Heart left ventricle (tissue), 16 donors: ENCODE measurements at regions of chr15 and their contacts with region 1.

Region 1: DNA sequence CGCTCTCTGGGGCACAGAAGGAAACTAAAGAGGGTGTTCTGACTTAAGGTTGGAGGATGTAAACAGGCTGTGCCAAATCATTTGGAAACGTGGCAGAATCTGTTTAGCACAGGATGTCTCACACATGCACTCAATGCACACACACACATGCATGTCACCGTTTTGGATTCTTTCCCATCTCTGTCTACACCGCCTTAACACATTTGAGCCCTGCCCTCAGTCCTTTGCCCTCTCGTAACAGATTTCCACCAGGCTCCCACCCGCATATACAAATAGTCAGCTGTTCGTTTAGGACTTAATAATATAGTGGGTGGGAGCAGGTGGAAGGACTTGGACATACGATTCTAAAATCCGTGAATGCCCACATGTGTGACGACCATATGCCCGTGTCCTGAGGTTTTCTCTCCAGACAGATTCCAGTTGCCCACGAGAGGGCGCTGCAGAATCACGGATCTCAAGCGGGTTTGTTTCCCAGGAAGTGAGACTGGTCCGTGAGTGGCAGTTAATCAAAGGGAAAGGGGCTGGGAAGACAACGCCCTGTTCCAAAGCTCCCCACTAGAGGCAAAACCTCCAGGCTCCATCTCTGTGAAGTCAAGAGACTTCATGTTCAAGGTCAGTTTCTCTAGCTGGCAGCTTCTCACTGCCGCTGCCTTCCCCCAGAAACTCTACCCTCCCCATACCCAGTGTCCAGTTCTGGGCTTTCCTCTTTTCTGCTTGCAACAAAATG is 44.5 kb downstream of the NOX5 start:
- DNase-seq: peak; percentile 84 to 93 (median 87)
- ATAC-seq: peak; percentile 78 to 85 (median 81)
- H3K4me3 ChIP-seq: peak overlapping the region in 6 of 12 donors; percentile 0 to 29 (median 22)
- H3K27ac ChIP-seq: peak overlapping the region in 8 of 12 donors; percentile 37 to 72 (median 58)
- H3K4me1 ChIP-seq: peaks cover 0 to 23% (median 16%) of the 10 kb centered on the region in 12 donors
- H3K27me3 ChIP-seq: peaks cover 0 to 8% (median 0%) of the 10 kb centered on the region in 9 donors
- CTCF ChIP-seq: peak; percentile 80 to 93 (median 88)
- POLR2A ChIP-seq: no peak

Region 2: DNA sequence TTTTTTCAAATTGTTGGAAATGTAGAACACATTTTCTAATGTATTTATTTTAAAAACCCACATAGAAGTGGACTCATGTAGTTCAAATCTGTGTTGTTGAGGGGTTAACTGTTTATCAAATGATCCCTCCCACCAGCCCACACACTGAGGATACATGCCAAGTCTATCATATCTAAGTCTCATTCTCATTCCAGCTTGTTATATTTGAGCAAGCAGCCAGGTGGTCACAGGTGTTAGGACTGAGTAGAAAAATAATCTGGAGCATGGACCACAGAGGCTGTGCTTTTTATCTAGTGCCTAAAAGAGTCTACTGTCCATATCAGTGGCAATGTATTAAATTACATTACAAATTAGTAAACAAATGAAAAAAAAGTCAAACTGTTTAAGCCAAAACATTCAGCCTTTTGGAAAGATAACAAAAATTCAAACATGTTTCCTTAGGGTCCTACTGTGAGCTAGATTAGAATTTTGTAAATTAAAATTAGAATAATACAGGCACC is 149.3 kb before region 1 on chr15:
- intact Hi-C with region 1: no loop called
- DNase-seq: no peak
- ATAC-seq: no peak
- H3K4me3 ChIP-seq: no peak overlapping the region
- H3K27ac ChIP-seq: no peak overlapping the region
- H3K4me1 ChIP-seq: no peaks in the 10 kb centered on the region
- H3K27me3 ChIP-seq: peaks cover 0 to 4% (median 0%) of the 10 kb centered on the region in 9 donors
- CTCF ChIP-seq: no peak
- POLR2A ChIP-seq: no peak

Region 3: DNA sequence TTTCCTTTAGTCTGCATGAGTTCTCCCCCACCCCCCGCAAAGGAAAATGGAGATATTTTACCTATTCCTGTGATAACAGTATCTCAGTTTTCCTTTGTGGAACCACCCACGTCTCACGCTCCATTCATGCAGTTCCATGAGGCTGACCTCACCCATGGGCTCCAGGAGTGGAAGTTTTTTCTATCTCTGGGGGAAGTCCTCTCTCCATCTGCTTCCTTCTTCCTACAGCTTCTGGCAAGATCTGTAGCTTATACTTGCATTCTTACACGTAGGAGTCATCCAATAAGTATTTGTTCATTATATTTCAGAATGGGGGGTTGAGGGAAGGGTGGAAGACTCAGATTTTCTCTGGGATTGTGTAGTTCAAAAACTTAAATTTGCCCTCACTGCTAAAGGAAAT is 95.7 kb after region 1 on chr15:
- intact Hi-C with region 1: loop called in 2 of 10 experiments (anchors 5 to 10 kb)
- DNase-seq: peak in 1 of 5 donors; percentile 37
- ATAC-seq: peak in 3 of 4 donors; percentile 33 to 90 (median 78)
- H3K4me3 ChIP-seq: no peak overlapping the region
- H3K27ac ChIP-seq: no peak overlapping the region
- H3K4me1 ChIP-seq: peaks cover 0 to 14% (median under 1%) of the 10 kb centered on the region in 12 donors
- H3K27me3 ChIP-seq: no peaks in the 10 kb centered on the region
- CTCF ChIP-seq: no peak
- POLR2A ChIP-seq: no peak

Region 4: DNA sequence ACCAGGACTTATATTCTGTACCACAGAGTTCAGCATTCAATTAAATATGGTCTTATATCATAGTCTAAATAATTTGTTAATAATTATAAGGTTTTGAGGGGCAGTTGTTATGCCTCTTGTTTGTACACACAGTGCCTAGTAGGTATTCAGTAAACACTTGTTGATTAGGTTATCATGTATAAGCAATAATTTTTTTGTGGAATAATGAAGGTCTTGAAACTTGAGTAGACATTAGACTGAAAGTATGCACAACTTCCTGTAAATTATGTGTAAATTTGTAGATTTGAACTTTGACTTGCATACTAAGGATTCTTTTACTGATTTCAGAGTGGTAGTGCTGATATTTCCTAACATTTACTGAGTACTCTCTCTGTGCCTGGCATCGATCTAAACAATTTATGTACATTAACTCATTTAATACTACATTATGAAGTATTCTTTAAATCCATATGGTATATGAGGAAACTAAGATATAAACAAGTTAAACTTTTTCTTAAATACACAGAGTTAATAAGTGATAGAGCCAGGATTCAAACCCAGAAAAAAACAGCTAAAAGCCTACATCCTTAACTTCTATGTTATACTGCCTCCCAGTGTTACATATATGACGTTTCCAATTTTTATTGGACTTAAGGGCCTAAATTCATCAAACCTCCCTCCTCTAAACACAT is 166.5 kb after region 1 on chr15:
- intact Hi-C with region 1: loop called (anchors 1 to 5 kb)
- DNase-seq: no peak
- ATAC-seq: no peak
- H3K4me3 ChIP-seq: no peak overlapping the region
- H3K27ac ChIP-seq: no peak overlapping the region
- H3K4me1 ChIP-seq: peaks cover 0 to 7% (median 0%) of the 10 kb centered on the region in 12 donors
- H3K27me3 ChIP-seq: no peaks in the 10 kb centered on the region
- CTCF ChIP-seq: peak in 7 of 12 donors; percentile 22 to 50 (median 41)
- POLR2A ChIP-seq: no peak

Region 5: GRCh38 chr15:69394556-69395282 is 335.7 kb after region 1 on chr15:
- intact Hi-C with region 1: loop called (anchors 1 to 2 kb)
- DNase-seq: peak; percentile 77 to 92 (median 81)
- ATAC-seq: peak; percentile 66 to 93 (median 90)
- H3K4me3 ChIP-seq: peak overlapping the region in 5 of 12 donors; percentile 10 to 39 (median 26)
- H3K27ac ChIP-seq: no peak overlapping the region
- H3K4me1 ChIP-seq: peaks cover 0 to 14% (median 7%) of the 10 kb centered on the region in 12 donors
- H3K27me3 ChIP-seq: peaks cover 0 to 5% (median 0%) of the 10 kb centered on the region in 9 donors
- CTCF ChIP-seq: peak; percentile 95 to 99 (median 97)
- POLR2A ChIP-seq: no peak

Region 6: DNA sequence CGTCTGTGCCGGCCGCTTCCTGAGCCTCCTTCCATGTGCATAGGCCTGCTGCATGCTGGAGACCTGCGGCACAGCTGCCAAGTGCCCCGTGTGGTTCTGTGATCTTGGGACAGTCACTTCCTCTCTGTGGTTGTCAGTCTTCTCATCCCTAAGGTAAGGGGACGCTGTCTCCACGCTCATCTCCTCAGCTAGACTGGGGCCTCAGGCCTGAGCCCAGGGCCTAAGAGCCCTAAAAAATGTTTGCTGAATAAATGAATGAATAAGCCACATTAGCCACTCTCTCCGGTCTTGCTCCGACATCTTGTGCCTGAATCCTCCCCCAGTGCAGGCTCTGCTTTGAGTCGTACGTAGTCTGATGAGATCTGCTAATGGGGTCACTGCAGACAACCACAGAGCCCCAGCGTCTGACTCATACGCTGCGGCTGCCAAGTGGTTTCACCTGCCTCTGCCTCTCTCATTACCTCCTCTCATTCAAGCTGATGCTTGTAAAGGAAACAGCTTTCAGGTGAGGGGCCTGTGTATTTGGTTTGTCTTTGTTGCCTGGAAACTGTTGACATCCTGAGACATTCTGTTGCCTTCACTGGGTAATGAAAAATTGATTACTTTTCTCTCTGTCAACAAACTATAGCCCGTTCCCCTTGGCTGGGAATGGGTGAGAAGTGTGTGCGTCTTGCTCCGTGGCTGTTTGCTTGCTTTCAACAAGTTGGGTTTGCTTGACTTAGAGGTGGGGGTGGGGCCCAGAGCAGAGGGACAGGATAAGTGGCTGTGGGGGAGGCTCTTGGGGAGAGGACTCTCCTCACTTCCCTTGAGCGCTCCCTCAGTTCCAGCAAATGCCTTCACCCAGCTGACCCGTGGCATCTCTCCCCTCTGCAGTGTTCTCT is 409.5 kb after region 1 on chr15:
- intact Hi-C with region 1: loop called in 1 of 10 experiments (anchors 5 kb)
- DNase-seq: no peak
- ATAC-seq: no peak
- H3K4me3 ChIP-seq: no peak overlapping the region
- H3K27ac ChIP-seq: peak overlapping the region in 1 of 12 donors; percentile 60
- H3K4me1 ChIP-seq: peaks cover 0 to 8% (median 1%) of the 10 kb centered on the region in 12 donors
- H3K27me3 ChIP-seq: no peaks in the 10 kb centered on the region
- CTCF ChIP-seq: no peak
- POLR2A ChIP-seq: no peak